ENCODE measurements at regions of chr7 and their contacts with region 1.

Region 1: DNA sequence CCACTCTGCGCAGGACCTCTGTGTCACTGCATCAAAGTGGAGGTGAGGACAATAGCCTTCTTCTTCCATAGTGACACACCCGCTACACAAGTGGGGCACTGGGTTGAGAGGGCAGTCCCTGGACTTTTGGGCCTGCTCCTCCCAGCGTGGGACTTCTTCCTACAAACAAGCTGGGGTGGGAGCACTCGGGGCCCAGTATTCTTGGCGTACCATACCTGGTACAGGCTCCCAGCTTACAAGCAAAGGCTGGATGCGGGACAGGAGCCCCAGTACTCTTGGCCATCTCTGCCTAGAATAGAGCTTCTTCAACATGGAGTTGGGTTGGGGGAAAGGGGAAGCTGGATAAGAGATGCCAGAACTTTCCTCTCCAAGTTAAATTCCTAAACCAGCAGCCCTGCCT is 426.8 kb upstream of the FOXK1 start:
- DNase-seq: no peak
- H3K4me3 ChIP-seq: no peak overlapping the region
- H3K27ac ChIP-seq: no peak overlapping the region
- H3K4me1 ChIP-seq: no peaks in the 10 kb centered on the region
- H3K27me3 ChIP-seq: no peaks in the 10 kb centered on the region
- CTCF ChIP-seq: no peak
- EP300 ChIP-seq: no peak
- POLR2A ChIP-seq: no peak
- RAD21 ChIP-seq: no peak

Region 2: DNA sequence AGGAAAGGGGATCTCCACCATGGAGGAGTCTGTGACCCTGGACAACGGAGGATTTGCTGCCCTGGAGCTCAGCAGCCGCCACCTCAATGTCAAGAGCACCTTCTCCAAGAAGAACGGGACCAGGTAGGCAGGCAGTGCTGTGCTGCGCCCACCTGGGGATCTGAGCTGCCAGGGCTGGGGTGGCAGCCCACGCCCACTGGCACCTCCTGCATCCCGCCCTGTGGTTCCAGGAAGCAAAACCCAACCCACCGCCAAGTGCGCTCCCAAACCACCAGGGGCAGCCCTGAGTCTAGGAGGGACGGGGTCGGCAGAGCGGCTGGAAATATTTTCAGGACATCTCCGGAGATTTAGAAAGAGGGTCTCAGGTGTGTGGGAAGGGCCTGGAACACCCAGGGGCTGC is 13.5 kb before region 1 on chr7:
- CTCF ChIA-PET with region 1: interaction called, 14 read pairs
- POLR2A ChIA-PET with region 1: interaction called, 3 read pairs
- DNase-seq: peak in 1 of 2 experiments; percentile 73
- H3K4me3 ChIP-seq: no peak overlapping the region
- H3K27ac ChIP-seq: no peak overlapping the region
- H3K4me1 ChIP-seq: peaks cover 4 to 17% (median 13%) of the 10 kb centered on the region in 4 experiments
- H3K27me3 ChIP-seq: no peaks in the 10 kb centered on the region
- CTCF ChIP-seq: peak; percentile 69 to 80 (median 74)
- EP300 ChIP-seq: no peak
- POLR2A ChIP-seq: no peak
- RAD21 ChIP-seq: peak; percentile 46 to 63

Measured in H1 (cell line).